BJ (cell line): ENCODE measurements at regions of chr14 and their contacts with region 1.

Region 1: DNA sequence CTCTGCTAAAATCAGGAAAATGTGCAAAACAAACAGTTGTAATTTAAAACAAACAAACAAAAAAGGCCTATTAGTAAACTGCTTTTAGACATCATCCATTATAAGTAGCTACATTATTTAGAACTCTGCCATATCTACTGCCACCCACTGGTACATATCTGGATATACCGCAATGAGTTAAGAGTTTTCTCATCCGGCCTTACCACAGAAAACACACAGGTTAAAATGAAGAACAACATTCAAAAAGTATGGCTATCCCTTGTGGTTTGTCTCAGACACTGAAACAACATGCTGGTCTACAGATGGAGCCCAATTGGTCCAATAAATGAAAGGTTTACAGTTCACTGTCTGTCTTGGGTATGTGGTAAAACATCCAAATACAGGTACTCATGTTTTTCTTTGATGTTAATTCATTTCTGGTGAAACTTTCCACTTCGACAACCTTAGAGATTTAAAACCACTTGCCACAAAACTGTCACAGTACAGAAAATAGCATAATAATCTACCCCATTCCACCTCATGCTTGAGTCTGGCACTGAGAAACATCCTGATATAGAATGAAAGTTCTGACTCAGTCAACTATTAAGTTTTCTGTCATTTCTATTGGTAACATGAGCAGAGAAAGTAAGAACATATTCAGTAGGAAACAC is 354.3 kb downstream of the CEP128 start:
- DNase-seq: no peak
- H3K4me3 ChIP-seq: no peak overlapping the region
- H3K27me3 ChIP-seq: no peaks in the 10 kb centered on the region
- CTCF ChIP-seq: peak; percentile 55

Region 2: DNA sequence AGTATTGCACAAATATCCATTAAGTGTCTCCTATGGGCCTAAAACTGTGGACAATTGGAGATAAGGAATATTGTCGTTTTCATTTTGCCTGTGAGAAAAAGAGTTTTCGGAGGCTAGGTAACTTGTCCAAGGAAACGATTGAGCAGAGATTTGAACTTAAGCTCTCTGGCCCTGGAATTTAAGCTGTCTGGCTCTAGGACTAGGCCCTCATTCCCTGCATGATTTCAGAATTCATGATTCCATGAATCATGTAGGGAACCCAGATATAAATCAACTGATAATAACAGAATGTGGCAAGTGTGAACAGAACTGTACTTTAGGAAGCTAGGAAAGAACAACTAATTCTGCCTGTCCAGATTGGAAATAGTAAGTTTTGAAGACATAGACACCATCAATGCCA is 1316.8 kb before region 1 on chr14:
- CTCF ChIA-PET with region 1: no interaction called
- POLR2A ChIA-PET with region 1: interaction called, 18 read pairs
- DNase-seq: no peak
- H3K4me3 ChIP-seq: no peak overlapping the region
- H3K27me3 ChIP-seq: no peaks in the 10 kb centered on the region
- CTCF ChIP-seq: no peak